HEK293T (cell line): ENCODE measurements at regions of chr20 and their contacts with region 1.

Region 1: GRCh38 chr20:38617011-38617829 is 15.6 kb downstream of the ARHGAP40 start:
- DNase-seq: no peak

Region 2: DNA sequence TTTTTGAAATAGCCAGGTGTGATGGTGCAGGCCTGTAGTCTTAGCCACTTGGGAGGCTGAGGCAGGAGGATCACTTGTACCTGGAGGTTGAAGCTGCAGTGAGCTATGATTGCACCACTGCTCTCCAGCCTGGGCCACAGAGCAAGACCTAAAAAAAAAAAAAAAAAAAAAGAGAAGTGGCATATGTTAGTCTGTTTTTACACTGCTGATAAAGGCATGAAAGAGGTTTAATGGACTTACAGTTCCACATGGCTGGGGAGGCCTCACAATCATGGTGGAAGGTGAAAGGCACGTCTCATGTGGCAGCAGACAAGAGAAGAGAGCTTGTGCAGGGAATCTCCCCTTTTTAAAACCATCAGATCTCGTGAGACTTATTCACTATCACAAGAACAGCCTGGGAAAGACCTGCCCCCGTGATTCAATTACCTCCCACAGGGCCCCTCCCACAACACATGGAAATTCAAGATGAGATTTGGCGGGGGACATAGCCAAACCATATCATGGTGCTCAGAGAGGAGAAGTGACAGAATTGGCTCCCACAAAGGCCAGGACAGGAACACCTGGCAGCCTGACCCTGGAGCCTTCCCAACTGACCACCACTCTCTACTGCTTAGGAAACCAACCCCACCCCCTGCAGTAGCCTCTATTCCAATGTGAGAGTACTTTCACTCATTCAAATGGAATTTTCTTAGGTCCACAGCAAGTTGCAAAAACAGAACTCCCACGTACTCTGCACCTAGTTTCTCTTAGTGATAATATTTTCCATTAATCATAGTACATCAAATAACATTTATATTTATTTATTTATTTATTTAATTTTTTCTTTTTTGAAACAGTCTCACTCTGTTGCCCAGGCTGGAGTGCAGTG is 14.2 kb after region 1 on chr20:
- CTCF ChIA-PET with region 1: interaction called, 10 read pairs
- POLR2A ChIA-PET with region 1: no interaction called
- DNase-seq: no peak

Region 3: DNA sequence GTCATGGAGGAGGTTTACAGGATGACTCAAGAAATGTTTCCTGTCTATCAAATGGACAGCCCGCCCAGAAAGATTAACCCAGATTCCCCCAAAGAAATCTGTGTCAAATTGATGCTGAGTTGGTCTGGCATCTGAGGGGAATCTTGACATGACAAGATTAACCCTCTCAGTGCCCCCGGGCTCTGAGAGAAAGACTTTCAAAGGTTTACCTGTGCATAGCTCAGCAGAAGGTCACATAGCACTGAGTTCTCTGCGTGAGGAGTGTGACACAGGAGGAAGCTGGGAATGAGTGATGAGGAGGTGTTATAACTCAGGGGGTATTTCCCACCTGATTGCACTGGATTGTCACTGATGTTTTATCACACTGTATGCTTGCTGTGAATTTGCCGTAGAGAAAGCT is 946.1 kb after region 1 on chr20:
- CTCF ChIA-PET with region 1: no interaction called
- POLR2A ChIA-PET with region 1: no interaction called
- DNase-seq: no peak